Mammary epithelial cell (primary cell): ENCODE measurements at regions of chr18 and their contacts with region 1.

Region 1: GRCh38 chr18:48330403-48331022 is 78.7 kb downstream of the ZBTB7C start:
- DNase-seq: peak; percentile 95
- H3K4me3 ChIP-seq: no peak overlapping the region
- H3K27ac ChIP-seq: peak overlapping the region; percentile 91
- H3K4me1 ChIP-seq: peaks cover 46% of the 10 kb centered on the region
- H3K27me3 ChIP-seq: no peaks in the 10 kb centered on the region
- CTCF ChIP-seq: no peak

Region 2: DNA sequence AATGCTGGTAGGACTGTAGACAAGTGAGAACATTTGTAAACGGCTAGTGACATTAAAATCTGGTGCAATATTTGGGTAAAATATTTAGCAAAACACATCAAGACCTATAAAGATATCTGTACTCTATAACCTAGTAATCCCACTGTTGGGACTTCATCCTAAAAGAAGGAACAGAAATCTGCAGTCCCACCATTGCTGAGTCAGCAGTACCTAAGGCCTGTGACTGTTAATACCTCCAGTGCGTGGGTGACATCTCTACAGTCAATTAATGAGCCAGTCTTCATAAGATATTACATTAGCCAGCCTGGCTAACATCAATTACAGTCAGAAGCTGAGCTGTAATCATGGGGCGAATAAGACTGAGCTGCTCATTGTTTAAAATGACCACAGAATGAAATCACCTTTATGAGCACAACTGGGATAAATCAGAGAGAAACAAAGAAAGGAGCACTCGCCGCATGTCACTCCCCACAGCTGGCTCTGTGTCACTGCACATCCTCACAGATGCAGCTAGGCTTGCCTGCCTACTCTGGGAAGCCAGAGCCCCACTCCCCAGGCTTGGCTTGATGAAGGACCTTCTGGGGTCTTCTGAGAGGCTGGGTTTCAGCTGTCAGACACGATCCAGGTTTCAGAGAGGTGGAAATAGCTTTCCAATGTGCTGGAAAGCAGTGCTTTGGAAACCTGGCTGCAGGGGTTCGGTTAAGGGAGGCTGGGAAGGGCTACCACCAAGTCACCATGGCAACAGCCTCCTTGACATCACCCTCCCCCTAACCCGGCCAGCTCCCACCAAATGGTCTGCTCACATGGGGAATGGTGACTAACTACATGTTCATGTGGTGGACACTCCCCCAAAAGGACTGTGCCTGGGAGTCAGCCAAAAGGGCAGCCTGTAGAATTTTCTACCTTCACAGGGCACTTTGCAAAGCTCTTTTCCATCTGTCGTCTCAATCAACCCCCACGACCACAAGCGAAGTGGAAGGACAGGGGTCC is 66.3 kb before region 1 on chr18:
- CTCF ChIA-PET with region 1: interaction called, 4 read pairs
- dilution Hi-C with region 1: no loop called
- in situ Hi-C with region 1: no loop called
- intact Hi-C with region 1: loop called (anchors 2 kb)
- DNase-seq: peak; percentile 95
- H3K4me3 ChIP-seq: peak overlapping the region in 1 of 3 experiments; percentile 20
- H3K27ac ChIP-seq: peak overlapping the region; percentile 83
- H3K4me1 ChIP-seq: peaks cover 28% of the 10 kb centered on the region
- H3K27me3 ChIP-seq: no peaks in the 10 kb centered on the region
- CTCF ChIP-seq: no peak